ENCODE measurements at regions of chr2 and their contacts with region 1.

Region 1: GRCh38 chr2:151842830-151843690 is 14.8 kb upstream of the ARL5A start:
- DNase-seq: no peak
- ATAC-seq: no peak
- H3K4me3 Mint-ChIP-seq: no peak overlapping the region
- H3K27ac Mint-ChIP-seq: no peak overlapping the region
- H3K4me1 Mint-ChIP-seq: peaks cover 2% of the 10 kb centered on the region
- H3K27me3 Mint-ChIP-seq: peaks cover 4% of the 10 kb centered on the region

Region 2: GRCh38 chr2:151862700-151863099 is 19.6 kb after region 1 on chr2:
- CTCF ChIA-PET with region 1: interaction called, 11 read pairs
- DNase-seq: no peak
- ATAC-seq: no peak
- H3K4me3 Mint-ChIP-seq: no peak overlapping the region
- H3K27ac Mint-ChIP-seq: no peak overlapping the region
- H3K4me1 Mint-ChIP-seq: no peaks in the 10 kb centered on the region
- H3K27me3 Mint-ChIP-seq: peaks cover 10% of the 10 kb centered on the region